SK-N-SH (cell line): ENCODE measurements at regions of chr11 and their contacts with region 1.

Region 1: GRCh38 chr11:19259487-19260345 is 19.0 kb upstream of the E2F8 start:
- DNase-seq: peak; percentile 73
- H3K4me3 ChIP-seq: peak overlapping the region in 1 of 2 experiments; percentile 24; a peak in 1 of 4 replicates
- H3K27ac ChIP-seq: no peak overlapping the region
- H3K4me1 ChIP-seq: no peaks in the 10 kb centered on the region
- H3K27me3 ChIP-seq: peaks cover 7% of the 10 kb centered on the region; the same call in 1 of the 2 replicates
- CTCF ChIP-seq: peak; percentile 97
- EP300 ChIP-seq: no peak
- RAD21 ChIP-seq: peak; percentile 77

Region 2: DNA sequence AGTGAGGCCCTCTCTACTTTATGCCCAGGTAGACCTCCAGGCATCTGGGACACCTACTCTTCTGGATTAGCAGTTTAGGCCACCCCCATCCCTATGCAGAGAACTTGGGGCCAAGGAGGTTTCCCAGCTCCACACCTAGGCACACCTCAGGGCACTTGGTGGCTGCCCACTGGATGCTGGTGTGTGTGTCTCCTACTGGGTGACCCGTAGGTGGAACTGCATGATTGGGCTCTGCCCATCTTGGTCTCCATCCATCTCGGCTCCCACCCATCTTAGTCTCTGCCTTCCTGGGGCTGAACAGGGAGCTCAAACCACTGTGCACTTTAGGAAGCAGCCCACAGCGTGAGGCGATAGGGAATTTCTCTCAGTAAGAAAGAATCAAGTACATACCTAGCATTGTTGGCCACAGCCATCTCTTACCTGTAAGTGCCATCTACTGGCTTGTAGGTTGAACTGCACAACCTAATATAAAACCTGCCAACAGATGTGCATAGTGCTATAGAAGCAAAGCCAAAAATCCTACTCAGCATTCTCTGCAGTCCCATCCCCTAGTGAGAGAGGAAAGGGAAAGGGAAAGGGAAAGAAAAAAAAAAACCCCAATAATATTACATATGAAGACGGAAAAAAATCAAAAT is 406.5 kb before region 1 on chr11:
- CTCF ChIA-PET with region 1: no interaction called
- POLR2A ChIA-PET with region 1: no interaction called
- DNase-seq: peak; percentile 21
- H3K4me3 ChIP-seq: no peak overlapping the region
- H3K27ac ChIP-seq: no peak overlapping the region
- H3K4me1 ChIP-seq: no peaks in the 10 kb centered on the region
- H3K27me3 ChIP-seq: no peaks in the 10 kb centered on the region; the same call in 1 of the 2 replicates
- CTCF ChIP-seq: peak; percentile 57
- EP300 ChIP-seq: no peak
- RAD21 ChIP-seq: peak; percentile 73

Region 3: DNA sequence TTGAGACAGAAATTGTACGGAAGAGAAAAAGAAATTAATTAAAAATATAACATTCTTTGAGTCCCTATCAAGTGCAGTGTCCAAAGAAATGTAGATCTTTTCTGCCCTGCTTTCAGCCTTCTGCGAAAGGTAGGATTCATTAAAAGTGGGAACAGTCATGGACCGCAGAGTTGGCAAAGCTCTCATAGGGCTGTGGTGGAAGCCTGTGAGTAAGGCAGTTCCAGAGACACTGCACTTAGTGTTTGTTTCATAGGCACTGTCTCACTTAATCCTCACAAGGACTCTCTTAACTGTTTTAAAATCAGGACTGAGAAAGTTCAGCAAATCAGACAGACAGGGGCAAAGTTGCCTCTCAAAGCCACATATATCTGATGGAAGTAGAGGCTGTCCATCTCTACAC is 204.7 kb before region 1 on chr11:
- CTCF ChIA-PET with region 1: no interaction called
- POLR2A ChIA-PET with region 1: no interaction called
- DNase-seq: no peak
- H3K4me3 ChIP-seq: no peak overlapping the region
- H3K27ac ChIP-seq: no peak overlapping the region
- H3K4me1 ChIP-seq: no peaks in the 10 kb centered on the region
- H3K27me3 ChIP-seq: peaks cover 20% of the 10 kb centered on the region
- CTCF ChIP-seq: no peak
- EP300 ChIP-seq: no peak
- RAD21 ChIP-seq: no peak

Region 4: DNA sequence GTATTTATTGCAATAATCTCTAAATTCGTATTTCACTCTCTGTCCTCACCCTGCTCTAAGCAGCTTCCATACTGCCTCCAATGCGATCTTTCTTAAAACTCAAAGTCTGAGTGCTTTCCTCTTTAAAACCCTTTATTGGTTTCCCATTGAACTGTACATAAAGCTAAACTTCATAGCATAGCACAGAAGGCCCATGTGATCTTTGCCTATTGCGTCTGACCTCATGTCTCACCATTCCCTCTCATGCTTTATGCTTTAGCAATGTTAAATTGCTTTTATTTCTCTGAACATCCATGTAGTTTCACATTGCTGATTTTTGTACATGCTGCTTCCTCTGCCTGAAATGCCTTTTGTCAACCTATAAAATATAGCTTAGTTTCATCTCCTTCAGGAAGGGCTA is 114.4 kb before region 1 on chr11:
- CTCF ChIA-PET with region 1: no interaction called
- POLR2A ChIA-PET with region 1: no interaction called
- DNase-seq: no peak
- H3K4me3 ChIP-seq: no peak overlapping the region
- H3K27ac ChIP-seq: no peak overlapping the region
- H3K4me1 ChIP-seq: no peaks in the 10 kb centered on the region
- H3K27me3 ChIP-seq: no peaks in the 10 kb centered on the region
- CTCF ChIP-seq: no peak
- EP300 ChIP-seq: no peak
- RAD21 ChIP-seq: no peak

Region 5: DNA sequence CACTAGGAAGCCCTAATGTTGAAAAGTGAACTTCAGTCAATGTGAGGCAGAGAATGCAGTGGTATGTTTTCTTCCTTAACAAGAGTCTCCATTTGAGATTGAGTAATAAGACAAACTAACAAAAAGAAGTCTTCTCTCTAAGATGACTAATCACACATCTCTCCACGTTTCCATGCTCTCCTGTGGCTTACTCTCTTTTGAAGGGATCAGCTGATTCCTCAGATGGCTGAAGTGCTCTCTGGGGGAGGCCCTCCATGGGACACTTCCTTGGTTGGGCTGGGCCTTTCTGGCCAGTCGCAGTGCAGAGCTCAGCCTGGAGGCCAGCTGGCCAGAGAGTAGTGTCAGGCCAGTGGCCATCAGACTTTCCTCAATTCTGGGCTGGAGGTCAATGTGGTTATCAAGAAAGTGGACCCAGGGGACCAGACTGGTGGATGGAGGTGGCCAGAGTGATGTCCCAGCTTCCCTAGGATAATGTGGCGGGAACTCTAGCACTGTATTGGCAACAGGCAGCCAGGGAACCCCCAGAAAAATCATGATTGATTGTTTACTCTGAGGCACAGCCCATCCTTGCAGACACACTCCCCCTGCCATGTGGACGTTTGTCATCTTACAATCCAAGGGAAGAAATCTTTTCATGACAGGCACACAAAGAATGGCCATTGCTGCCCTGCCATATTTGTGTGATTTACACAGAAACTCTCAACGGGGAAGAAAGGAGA is 72.4 kb before region 1 on chr11:
- CTCF ChIA-PET with region 1: no interaction called
- POLR2A ChIA-PET with region 1: no interaction called
- DNase-seq: no peak
- H3K4me3 ChIP-seq: no peak overlapping the region
- H3K27ac ChIP-seq: no peak overlapping the region
- H3K4me1 ChIP-seq: no peaks in the 10 kb centered on the region; a peak in 1 of 4 replicates
- H3K27me3 ChIP-seq: no peaks in the 10 kb centered on the region
- CTCF ChIP-seq: no peak
- EP300 ChIP-seq: no peak
- RAD21 ChIP-seq: no peak

Region 6: DNA sequence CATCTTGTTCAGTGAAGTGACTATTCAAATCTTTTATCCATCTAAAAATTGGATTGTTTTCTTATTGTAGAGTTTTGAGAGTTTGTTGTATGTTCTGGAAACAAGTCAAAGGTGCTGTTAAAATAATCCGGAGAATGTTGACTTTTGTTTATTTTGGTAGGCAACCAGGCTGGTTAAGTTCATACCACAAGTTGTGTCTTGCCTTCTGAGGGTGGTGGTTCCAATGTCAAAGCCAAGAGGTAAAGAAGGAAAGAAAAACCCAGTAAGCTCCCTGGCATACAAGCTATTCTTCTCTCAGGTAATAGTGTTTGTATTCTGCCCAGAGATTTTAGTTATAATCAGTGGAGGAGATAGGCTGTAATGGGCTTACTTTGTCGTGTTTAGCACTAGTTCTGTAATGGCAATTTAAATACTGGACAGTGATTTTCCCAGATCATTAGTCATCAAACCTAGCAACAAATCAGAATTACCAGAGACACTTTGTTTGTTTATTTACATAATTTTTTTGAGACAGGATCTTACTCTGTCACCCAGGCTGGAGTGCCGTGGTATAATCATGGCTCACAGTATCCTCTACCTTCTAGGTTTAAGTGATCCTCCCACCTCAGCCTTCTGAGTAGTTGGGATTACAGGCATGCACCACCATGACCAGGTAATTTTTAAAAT is 42.9 kb before region 1 on chr11:
- CTCF ChIA-PET with region 1: interaction called, 13 read pairs
- POLR2A ChIA-PET with region 1: no interaction called
- DNase-seq: no peak
- H3K4me3 ChIP-seq: no peak overlapping the region
- H3K27ac ChIP-seq: no peak overlapping the region
- H3K4me1 ChIP-seq: peaks cover 0 to 6% of the 10 kb centered on the region in 2 experiments; a peak in 1 of 4 replicates
- H3K27me3 ChIP-seq: no peaks in the 10 kb centered on the region
- CTCF ChIP-seq: no peak
- EP300 ChIP-seq: no peak
- RAD21 ChIP-seq: no peak

Region 7: GRCh38 chr11:19288256-19288655 is 28.5 kb after region 1 on chr11:
- CTCF ChIA-PET with region 1: interaction called, 18 read pairs
- POLR2A ChIA-PET with region 1: no interaction called
- DNase-seq: no peak
- H3K4me3 ChIP-seq: no peak overlapping the region
- H3K27ac ChIP-seq: no peak overlapping the region
- H3K4me1 ChIP-seq: no peaks in the 10 kb centered on the region
- H3K27me3 ChIP-seq: peaks cover 9% of the 10 kb centered on the region
- CTCF ChIP-seq: no peak
- EP300 ChIP-seq: no peak
- RAD21 ChIP-seq: no peak

Region 8: DNA sequence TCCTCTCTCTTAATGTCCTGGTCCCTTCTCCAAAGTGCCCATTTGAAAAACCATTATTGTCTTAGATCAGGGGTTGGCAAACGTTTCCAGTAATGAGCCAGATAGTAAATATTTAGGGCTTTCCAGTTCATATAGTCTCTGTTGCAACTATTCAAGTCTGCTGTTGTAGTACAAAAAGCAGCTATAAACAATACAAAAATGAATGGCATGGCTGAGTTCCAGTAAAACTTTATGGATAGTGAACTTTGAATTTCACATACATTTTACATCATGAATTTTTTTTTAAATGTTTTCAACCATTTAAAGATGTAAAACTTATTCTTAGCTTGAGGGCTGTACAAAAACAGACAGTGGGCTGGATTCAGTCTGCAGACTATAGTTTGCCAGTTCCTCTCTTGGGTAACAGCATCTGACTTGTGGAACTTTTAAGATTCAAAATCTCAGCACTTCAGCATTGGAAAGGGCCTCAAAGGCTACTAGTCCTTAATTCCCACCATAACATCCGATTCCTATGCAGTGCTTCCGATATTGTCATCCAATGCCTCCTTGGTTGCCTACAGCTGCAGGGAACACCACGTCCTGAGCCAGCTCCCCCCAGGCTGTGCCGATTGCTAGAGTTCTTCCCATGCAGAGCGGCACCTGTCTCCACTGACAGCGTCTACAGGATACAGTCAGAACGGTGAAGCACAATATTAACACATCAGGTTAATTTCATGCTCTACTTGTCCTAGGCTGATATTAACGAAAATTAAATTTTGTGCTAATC is 46.6 kb after region 1 on chr11:
- CTCF ChIA-PET with region 1: interaction called, 25 read pairs
- POLR2A ChIA-PET with region 1: no interaction called
- DNase-seq: no peak
- H3K4me3 ChIP-seq: no peak overlapping the region
- H3K27ac ChIP-seq: no peak overlapping the region
- H3K4me1 ChIP-seq: peaks cover 0 to 3% of the 10 kb centered on the region in 2 experiments; a peak in 1 of 4 replicates
- H3K27me3 ChIP-seq: peaks cover 14% of the 10 kb centered on the region; the same call in 1 of the 2 replicates
- CTCF ChIP-seq: no peak
- EP300 ChIP-seq: no peak
- RAD21 ChIP-seq: no peak